ENCODE measurements at regions of chr16 and their contacts with region 1.

Region 1: GRCh38 chr16:77171745-77172635 is 19.0 kb upstream of the MON1B start:
- DNase-seq: peak; percentile 47
- H3K4me3 ChIP-seq: no peak overlapping the region; a peak in 1 of 4 replicates
- H3K27ac ChIP-seq: no peak overlapping the region
- H3K4me1 ChIP-seq: no peaks in the 10 kb centered on the region
- H3K27me3 ChIP-seq: no peaks in the 10 kb centered on the region
- CTCF ChIP-seq: peak; percentile 80
- EP300 ChIP-seq: no peak
- RAD21 ChIP-seq: peak; percentile 90

Region 2: DNA sequence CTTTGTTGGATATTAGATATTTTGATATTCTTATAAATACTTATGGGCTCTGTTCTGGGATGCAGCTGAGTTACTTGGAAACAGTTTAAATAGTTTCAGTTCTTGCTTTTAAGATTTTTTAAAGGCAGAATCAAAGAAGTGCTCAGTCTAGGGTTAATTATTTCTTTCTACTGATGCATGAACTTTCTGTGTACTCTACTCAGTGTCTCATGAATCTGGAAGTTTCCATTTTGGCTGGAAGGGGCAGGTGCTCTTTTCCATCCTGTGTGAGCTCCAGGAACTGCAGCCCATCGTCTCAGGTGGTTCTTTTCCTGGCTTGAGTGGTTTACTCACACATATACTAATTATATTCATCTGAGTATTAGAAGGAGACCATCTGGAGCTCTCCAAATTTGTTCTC is 1384.5 kb before region 1 on chr16:
- CTCF ChIA-PET with region 1: interaction called, 44 read pairs
- POLR2A ChIA-PET with region 1: no interaction called
- DNase-seq: no peak
- H3K4me3 ChIP-seq: no peak overlapping the region
- H3K27ac ChIP-seq: no peak overlapping the region
- H3K4me1 ChIP-seq: no peaks in the 10 kb centered on the region; a peak in 1 of 4 replicates
- H3K27me3 ChIP-seq: no peaks in the 10 kb centered on the region
- CTCF ChIP-seq: no peak
- EP300 ChIP-seq: no peak
- RAD21 ChIP-seq: no peak

Region 3: DNA sequence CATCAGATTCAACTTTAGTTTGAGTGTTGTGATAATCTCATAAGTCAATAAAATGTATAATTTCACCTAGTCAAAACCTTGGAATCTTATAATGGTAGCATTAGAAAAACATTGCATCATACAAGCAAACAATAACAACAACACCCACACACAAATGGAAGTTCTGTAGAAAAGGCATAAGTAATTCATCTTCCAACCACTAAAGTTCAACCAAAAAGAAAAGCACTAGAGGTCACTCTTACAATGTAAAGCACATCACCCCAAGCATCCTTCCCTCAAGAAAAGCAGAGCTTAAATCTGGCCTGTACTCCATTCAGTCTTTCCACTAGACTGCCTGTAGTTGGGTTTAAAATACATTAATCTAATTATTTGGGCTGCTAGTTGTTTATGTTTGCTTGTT is 893.0 kb before region 1 on chr16:
- CTCF ChIA-PET with region 1: interaction called, 84 read pairs
- POLR2A ChIA-PET with region 1: no interaction called
- DNase-seq: peak; percentile 21
- H3K4me3 ChIP-seq: no peak overlapping the region; a peak in 1 of 4 replicates
- H3K27ac ChIP-seq: no peak overlapping the region; a peak in 1 of 4 replicates
- H3K4me1 ChIP-seq: no peaks in the 10 kb centered on the region; a peak in 2 of 4 replicates
- H3K27me3 ChIP-seq: no peaks in the 10 kb centered on the region
- CTCF ChIP-seq: peak; percentile 23; the same call in 1 of the 2 replicates
- EP300 ChIP-seq: no peak
- RAD21 ChIP-seq: peak; percentile 85

Region 4: DNA sequence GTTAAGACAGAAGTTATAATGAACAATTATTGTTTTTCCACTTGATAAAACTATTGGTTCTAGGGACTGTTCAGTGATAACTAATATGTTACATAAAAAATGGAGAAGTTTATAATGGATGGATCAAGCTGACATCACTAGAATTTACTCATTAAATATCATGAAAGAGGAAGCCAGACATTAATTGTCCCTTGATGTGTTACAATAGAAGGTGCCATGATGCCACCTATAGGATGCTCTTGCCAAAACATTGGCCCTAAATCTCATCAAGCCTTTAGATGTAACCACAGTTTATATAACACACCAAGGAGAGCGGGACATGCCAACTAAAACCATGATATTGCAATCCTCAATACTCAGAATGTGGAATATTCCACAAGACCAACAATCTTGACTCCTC is 128.9 kb before region 1 on chr16:
- CTCF ChIA-PET with region 1: interaction called, 31 read pairs
- POLR2A ChIA-PET with region 1: no interaction called
- DNase-seq: peak; percentile 39
- H3K4me3 ChIP-seq: no peak overlapping the region
- H3K27ac ChIP-seq: no peak overlapping the region
- H3K4me1 ChIP-seq: no peaks in the 10 kb centered on the region; a peak in 1 of 4 replicates
- H3K27me3 ChIP-seq: no peaks in the 10 kb centered on the region
- CTCF ChIP-seq: peak; percentile 59
- EP300 ChIP-seq: no peak
- RAD21 ChIP-seq: peak; percentile 84

Region 5: DNA sequence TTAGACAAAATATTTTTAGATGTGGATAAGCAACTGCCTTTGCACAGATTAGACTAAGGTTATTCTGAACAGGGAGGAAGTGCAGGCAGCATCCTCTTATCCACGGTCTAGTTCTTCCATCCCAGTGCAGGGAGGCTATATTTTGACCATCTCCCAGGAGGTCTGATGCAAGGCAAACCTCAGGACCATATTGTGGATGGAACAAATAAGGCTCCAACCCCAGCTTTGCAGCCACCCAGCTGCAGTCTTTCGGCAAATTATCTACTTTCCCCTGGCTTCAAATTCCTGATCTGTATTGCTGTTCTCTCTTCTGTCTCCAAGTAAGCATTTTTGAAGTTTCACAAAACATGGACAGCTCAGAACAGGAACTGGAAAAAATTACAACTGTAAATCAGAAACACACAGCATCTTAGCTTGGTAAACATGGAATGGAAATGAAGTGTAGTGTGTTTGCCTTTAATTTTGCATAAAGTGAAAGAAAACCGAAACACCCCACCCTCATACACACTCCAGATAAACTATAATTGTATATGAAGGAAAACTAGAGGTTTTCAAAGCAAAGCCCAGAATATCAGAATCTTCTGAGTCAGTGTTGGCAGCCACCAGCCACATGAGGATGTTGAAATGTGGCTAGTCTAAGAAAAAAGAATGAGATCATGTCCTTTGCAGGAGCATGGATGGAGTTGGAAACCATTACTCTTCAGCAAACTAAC is 14.5 kb before region 1 on chr16:
- CTCF ChIA-PET with region 1: interaction called, 14 read pairs
- POLR2A ChIA-PET with region 1: no interaction called
- DNase-seq: no peak
- H3K4me3 ChIP-seq: no peak overlapping the region
- H3K27ac ChIP-seq: no peak overlapping the region
- H3K4me1 ChIP-seq: peaks cover 0 to 2% of the 10 kb centered on the region in 2 experiments; a peak in 1 of 4 replicates
- H3K27me3 ChIP-seq: no peaks in the 10 kb centered on the region
- CTCF ChIP-seq: no peak
- EP300 ChIP-seq: no peak
- RAD21 ChIP-seq: no peak